MCF 10A (cell line): ENCODE measurements at regions of chr20 and their contacts with region 1.

Region 1: GRCh38 chr20:2133318-2134183 is 31.9 kb downstream of the STK35 start:
- DNase-seq: peak; percentile 38
- H3K4me3 Mint-ChIP-seq: no peak overlapping the region
- H3K27ac Mint-ChIP-seq: no peak overlapping the region
- H3K4me1 Mint-ChIP-seq: peaks cover 34% of the 10 kb centered on the region
- H3K27me3 Mint-ChIP-seq: no peaks in the 10 kb centered on the region
- CTCF ChIP-seq: no peak

Region 2: DNA sequence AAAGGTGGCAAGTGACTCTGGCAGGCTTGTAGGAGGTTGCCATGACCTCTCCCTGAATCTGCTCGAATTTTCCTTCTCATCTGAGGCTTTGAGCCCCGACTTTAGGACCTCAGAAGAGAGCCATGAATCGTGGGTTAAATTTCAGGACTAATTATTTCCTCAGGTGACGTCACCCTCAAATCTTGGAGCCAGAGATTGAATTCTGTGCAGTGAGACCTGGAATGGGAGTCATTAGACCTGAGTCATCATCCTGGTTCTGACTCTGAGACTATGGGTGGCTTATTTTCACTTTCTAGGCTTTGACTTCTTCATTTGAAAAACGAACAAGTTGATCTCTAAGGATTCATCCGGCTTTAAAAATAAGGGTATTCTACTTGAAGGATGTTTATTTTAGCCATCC is 91.2 kb before region 1 on chr20:
- CTCF ChIA-PET with region 1: no interaction called
- POLR2A ChIA-PET with region 1: no interaction called
- intact Hi-C with region 1: no loop called
- DNase-seq: peak; percentile 53
- H3K4me3 Mint-ChIP-seq: no peak overlapping the region
- H3K27ac Mint-ChIP-seq: no peak overlapping the region
- H3K4me1 Mint-ChIP-seq: no peaks in the 10 kb centered on the region
- H3K27me3 Mint-ChIP-seq: peaks cover 51% of the 10 kb centered on the region
- CTCF ChIP-seq: no peak

Region 3: DNA sequence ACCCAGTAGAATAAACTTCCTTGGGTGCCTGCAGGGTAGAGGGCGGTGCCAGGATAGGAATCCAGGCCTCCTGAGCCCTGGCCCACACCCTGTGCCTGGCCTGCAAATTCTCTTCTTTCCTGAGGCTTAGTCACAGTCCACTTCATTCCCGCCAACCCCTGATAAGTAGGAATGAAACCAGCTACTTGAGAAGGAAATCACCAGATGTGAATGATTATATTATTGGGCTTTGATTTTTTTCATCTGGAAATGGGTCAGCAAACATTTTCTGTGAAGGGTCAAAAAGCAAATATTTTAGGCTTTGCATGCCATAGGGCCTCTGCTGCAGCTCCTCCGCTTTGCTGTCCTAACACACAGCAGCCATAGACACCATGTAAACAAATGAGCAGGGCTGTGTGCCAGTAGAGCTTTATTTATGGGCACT is 18.3 kb after region 1 on chr20:
- CTCF ChIA-PET with region 1: interaction called, 4 read pairs
- POLR2A ChIA-PET with region 1: interaction called, 11 read pairs
- intact Hi-C with region 1: no loop called
- DNase-seq: peak; percentile 64
- H3K4me3 Mint-ChIP-seq: no peak overlapping the region
- H3K27ac Mint-ChIP-seq: peak overlapping the region; percentile 92
- H3K4me1 Mint-ChIP-seq: peaks cover 31% of the 10 kb centered on the region
- H3K27me3 Mint-ChIP-seq: no peaks in the 10 kb centered on the region
- CTCF ChIP-seq: no peak